B cell (primary cell): ENCODE measurements at regions of chrX and their contacts with region 1.

Region 1: GRCh38 chrX:46408553-46409407 is 136.4 kb downstream of the ZNF674 start:
- DNase-seq: peak; percentile 55
- ATAC-seq: no peak
- H3K4me3 ChIP-seq: no peak overlapping the region
- H3K4me3 Mint-ChIP-seq: no peak overlapping the region
- H3K27ac ChIP-seq: no peak overlapping the region
- H3K27ac Mint-ChIP-seq: no peak overlapping the region
- H3K4me1 ChIP-seq: no peaks in the 10 kb centered on the region
- H3K4me1 Mint-ChIP-seq: no peaks in the 10 kb centered on the region
- H3K27me3 ChIP-seq: no peaks in the 10 kb centered on the region
- H3K27me3 Mint-ChIP-seq: no peaks in the 10 kb centered on the region
- CTCF ChIP-seq: peak; percentile 78

Region 2: GRCh38 chrX:45801554-45801953 is 607.2 kb before region 1 on chrX:
- CTCF ChIA-PET with region 1: interaction called, 4 read pairs
- POLR2A ChIA-PET with region 1: no interaction called
- intact Hi-C with region 1: loop called (anchors 10 kb)
- DNase-seq: peak; percentile 34
- ATAC-seq: no peak
- H3K4me3 ChIP-seq: no peak overlapping the region
- H3K4me3 Mint-ChIP-seq: no peak overlapping the region
- H3K27ac ChIP-seq: no peak overlapping the region
- H3K27ac Mint-ChIP-seq: no peak overlapping the region
- H3K4me1 ChIP-seq: peaks cover 6 to 7% of the 10 kb centered on the region in 2 donors
- H3K4me1 Mint-ChIP-seq: peaks cover 7% of the 10 kb centered on the region
- H3K27me3 ChIP-seq: no peaks in the 10 kb centered on the region
- H3K27me3 Mint-ChIP-seq: no peaks in the 10 kb centered on the region
- CTCF ChIP-seq: peak; percentile 39

Region 3: GRCh38 chrX:46354481-46354880 is 54.3 kb before region 1 on chrX:
- CTCF ChIA-PET with region 1: no interaction called
- POLR2A ChIA-PET with region 1: no interaction called
- intact Hi-C with region 1: no loop called
- DNase-seq: no peak
- ATAC-seq: no peak
- H3K4me3 ChIP-seq: no peak overlapping the region
- H3K4me3 Mint-ChIP-seq: no peak overlapping the region
- H3K27ac ChIP-seq: no peak overlapping the region
- H3K27ac Mint-ChIP-seq: no peak overlapping the region
- H3K4me1 ChIP-seq: no peaks in the 10 kb centered on the region
- H3K4me1 Mint-ChIP-seq: no peaks in the 10 kb centered on the region
- H3K27me3 ChIP-seq: no peaks in the 10 kb centered on the region
- H3K27me3 Mint-ChIP-seq: no peaks in the 10 kb centered on the region
- CTCF ChIP-seq: no peak

Region 4: DNA sequence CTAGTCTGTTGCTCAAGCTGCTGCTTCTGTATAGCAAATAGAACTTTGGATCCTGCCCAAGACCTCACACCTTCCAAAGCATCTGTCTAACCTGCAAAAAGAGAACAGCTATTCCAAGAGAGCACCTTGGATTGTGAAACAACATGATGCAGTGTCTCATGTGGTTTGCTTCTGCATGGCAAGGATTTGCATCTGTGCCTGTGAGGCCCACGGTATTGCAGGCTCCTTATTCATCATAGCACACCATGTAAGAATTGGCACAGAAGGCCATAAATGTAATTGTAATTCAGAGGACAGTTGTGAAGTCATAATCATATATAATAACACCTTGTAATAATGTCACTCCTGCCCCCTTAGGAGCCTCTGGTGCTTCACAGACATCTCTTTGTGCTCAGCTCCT is 10.7 kb before region 1 on chrX:
- CTCF ChIA-PET with region 1: interaction called, 10 read pairs
- POLR2A ChIA-PET with region 1: no interaction called
- intact Hi-C with region 1: no loop called
- DNase-seq: no peak
- ATAC-seq: no peak
- H3K4me3 ChIP-seq: no peak overlapping the region
- H3K4me3 Mint-ChIP-seq: no peak overlapping the region
- H3K27ac ChIP-seq: no peak overlapping the region
- H3K27ac Mint-ChIP-seq: no peak overlapping the region
- H3K4me1 ChIP-seq: no peaks in the 10 kb centered on the region
- H3K4me1 Mint-ChIP-seq: no peaks in the 10 kb centered on the region
- H3K27me3 ChIP-seq: no peaks in the 10 kb centered on the region
- H3K27me3 Mint-ChIP-seq: no peaks in the 10 kb centered on the region
- CTCF ChIP-seq: no peak